ENCODE measurements at regions of chrX and their contacts with region 1.

Region 1: GRCh38 chrX:69093960-69094871 is 71.0 kb downstream of the PJA1 start:
- DNase-seq: peak in 3 of 6 donors; percentile 25 to 45 (median 44)
- ATAC-seq: peak; percentile 60 to 91 (median 79)
- H3K4me3 ChIP-seq: no peak overlapping the region
- H3K27ac ChIP-seq: no peak overlapping the region
- H3K4me1 ChIP-seq: no peaks in the 10 kb centered on the region
- H3K27me3 ChIP-seq: no peaks in the 10 kb centered on the region
- CTCF ChIP-seq: peak; percentile 45 to 59 (median 48)

Region 2: GRCh38 chrX:69216911-69217310 is 122.7 kb after region 1 on chrX:
- intact Hi-C with region 1: loop called in 1 of 3 experiments (anchors 10 kb)
- DNase-seq: no peak
- ATAC-seq: no peak
- H3K4me3 ChIP-seq: no peak overlapping the region
- H3K27ac ChIP-seq: no peak overlapping the region
- H3K4me1 ChIP-seq: no peaks in the 10 kb centered on the region
- H3K27me3 ChIP-seq: no peaks in the 10 kb centered on the region
- CTCF ChIP-seq: no peak

Region 3: DNA sequence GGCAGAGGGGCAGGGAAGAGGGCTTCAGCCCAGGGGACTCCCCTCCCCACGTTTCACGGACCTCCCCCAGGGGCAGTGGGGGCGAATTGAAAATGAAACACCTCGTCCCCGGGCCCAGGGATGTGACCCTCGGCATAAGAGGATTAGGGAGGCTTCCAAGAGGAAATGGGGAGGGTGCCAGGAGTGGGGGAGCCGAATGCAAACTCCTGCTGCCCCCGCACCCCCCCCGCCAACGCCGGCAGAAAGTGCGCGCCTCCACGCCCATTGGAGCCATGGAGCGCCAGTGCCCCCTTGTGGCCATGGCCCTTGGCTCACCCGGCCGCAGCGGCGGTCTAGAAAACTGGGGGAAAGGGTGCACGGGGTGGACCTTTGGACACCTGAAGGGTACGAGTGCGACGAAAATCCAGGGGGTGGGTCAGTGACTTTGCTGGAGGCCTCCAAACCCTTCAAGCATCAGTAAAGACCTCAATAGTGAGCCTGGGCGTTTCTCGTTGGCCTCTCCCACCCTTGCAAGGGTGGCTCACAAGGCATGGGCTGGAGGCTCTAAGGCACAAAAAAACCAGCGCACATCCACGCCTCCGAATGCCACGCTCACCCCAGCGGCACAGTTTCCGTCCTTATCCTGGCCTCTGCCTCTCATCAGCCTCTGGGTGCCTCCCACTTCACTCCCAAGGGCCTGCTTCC is 191.8 kb after region 1 on chrX:
- intact Hi-C with region 1: loop called in 1 of 3 experiments (anchors 10 kb)
- DNase-seq: peak; percentile 26 to 90 (median 67)
- ATAC-seq: peak; percentile 83 to 90 (median 88)
- H3K4me3 ChIP-seq: peak overlapping the region in 2 of 4 donors; percentile 13 to 39
- H3K27ac ChIP-seq: no peak overlapping the region
- H3K4me1 ChIP-seq: no peaks in the 10 kb centered on the region
- H3K27me3 ChIP-seq: peaks cover 0 to 8% (median 0%) of the 10 kb centered on the region in 4 donors
- CTCF ChIP-seq: peak; percentile 72 to 96 (median 90)

Region 4: DNA sequence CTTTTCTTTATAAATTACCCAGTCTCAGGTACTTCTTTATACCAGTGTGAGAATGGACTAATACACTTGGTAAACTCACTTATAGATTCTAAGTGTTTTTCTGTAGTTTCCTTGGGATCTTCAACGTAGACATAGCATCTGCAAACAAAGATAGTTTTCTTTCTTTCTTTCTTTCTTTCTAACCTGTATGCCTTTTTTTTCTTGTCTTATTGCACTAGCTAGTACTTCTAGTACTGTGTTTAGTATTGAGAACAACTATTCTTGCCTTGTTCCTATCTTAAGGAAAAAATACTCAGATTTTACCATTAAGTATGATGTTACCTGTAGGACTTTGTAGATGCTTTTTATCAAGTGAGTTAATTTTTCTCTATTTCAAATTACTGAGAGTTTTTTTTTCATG is 623.9 kb after region 1 on chrX:
- intact Hi-C with region 1: no loop called
- DNase-seq: no peak
- ATAC-seq: no peak
- H3K4me3 ChIP-seq: no peak overlapping the region
- H3K27ac ChIP-seq: no peak overlapping the region
- H3K4me1 ChIP-seq: no peaks in the 10 kb centered on the region
- H3K27me3 ChIP-seq: no peaks in the 10 kb centered on the region
- CTCF ChIP-seq: no peak